Mammary epithelial cell (primary cell): ENCODE measurements at regions of chr5 and their contacts with region 1.

Region 1: GRCh38 chr5:38922199-38922598 is 76.4 kb downstream of the OSMR start:
- DNase-seq: peak; percentile 33
- H3K4me3 ChIP-seq: no peak overlapping the region
- H3K27ac ChIP-seq: no peak overlapping the region
- H3K4me1 ChIP-seq: no peaks in the 10 kb centered on the region
- H3K27me3 ChIP-seq: no peaks in the 10 kb centered on the region
- CTCF ChIP-seq: peak; percentile 91

Region 2: DNA sequence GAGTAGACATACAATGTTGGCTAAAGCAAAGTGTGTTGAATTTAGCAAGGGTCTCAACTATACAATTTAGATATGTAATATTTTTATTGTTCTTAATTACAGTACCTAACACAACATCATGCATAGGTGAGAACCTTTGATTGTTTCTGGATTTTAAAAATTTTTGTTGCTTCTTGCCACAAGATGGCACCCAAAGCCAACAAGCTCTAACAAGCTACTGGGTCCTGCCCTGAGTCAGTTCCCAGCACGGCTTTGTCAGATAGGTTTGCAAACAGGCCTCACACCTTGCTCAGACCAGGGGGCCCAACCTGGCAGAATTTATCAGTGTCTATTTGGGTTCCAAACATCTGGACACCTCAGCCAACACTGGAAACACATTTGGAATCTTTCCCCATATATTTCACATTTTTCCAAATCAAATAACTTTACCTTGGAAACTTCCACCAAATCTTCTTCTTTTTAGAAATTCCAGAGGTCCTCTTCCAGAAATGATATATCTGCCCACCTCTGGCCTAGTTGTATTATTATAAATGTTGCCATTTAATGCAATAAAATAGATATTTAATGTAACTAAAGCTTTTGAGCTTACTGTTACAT is 713.3 kb before region 1 on chr5:
- CTCF ChIA-PET with region 1: no interaction called
- dilution Hi-C with region 1: no loop called
- in situ Hi-C with region 1: no loop called
- intact Hi-C with region 1: loop called (anchors 5 kb)
- DNase-seq: peak; percentile 37
- H3K4me3 ChIP-seq: no peak overlapping the region
- H3K27ac ChIP-seq: no peak overlapping the region
- H3K4me1 ChIP-seq: no peaks in the 10 kb centered on the region
- H3K27me3 ChIP-seq: no peaks in the 10 kb centered on the region
- CTCF ChIP-seq: peak; percentile 39 to 75

Region 3: DNA sequence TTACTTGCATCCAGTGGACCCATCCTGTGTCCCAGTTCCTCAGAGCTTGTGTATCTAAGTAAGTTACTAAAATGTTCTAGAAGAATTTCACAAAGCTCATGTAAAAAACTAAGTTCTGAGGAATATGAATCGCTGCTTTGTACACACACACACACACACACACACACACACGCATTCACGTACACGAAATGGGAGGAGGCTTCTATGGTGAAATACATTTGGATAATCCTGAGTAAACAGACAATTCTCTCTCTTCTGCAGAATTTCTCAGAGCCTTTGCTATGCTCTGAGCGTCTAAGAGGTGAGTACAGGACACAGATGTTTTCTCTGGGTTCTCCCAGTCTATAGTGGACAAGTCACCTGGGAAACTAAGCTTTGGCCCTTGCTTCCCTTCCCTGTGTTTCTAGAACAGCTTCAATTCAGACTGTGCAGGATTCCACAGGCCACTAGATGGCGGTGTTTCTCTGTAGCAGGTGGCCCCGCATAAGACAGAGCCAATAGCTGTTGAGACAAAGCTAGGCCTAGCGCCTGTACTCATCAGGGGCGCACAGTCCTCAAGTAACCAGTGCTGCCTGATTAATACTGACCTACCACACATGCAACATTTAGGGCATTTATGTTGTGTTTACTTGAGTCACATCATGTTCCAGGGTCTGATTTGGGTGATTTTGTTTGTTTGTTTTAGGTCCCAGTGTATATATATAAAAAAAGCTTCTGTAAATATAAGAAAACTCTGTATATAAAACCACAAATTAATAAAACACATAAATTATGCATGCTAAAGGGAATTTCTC is 480.5 kb before region 1 on chr5:
- CTCF ChIA-PET with region 1: interaction called, 8 read pairs
- dilution Hi-C with region 1: no loop called
- in situ Hi-C with region 1: no loop called
- intact Hi-C with region 1: loop called (anchors 1 kb)
- DNase-seq: peak; percentile 73
- H3K4me3 ChIP-seq: no peak overlapping the region
- H3K27ac ChIP-seq: no peak overlapping the region
- H3K4me1 ChIP-seq: no peaks in the 10 kb centered on the region
- H3K27me3 ChIP-seq: no peaks in the 10 kb centered on the region
- CTCF ChIP-seq: peak; percentile 98

Region 4: GRCh38 chr5:38831909-38832308 is 90.3 kb before region 1 on chr5:
- CTCF ChIA-PET with region 1: interaction called, 11 read pairs
- dilution Hi-C with region 1: no loop called
- in situ Hi-C with region 1: no loop called
- intact Hi-C with region 1: loop called (anchors 1 kb)
- DNase-seq: peak; percentile 46
- H3K4me3 ChIP-seq: no peak overlapping the region
- H3K27ac ChIP-seq: peak overlapping the region; percentile 86
- H3K4me1 ChIP-seq: peaks cover 38% of the 10 kb centered on the region
- H3K27me3 ChIP-seq: no peaks in the 10 kb centered on the region
- CTCF ChIP-seq: peak; percentile 35 to 54

Region 5: DNA sequence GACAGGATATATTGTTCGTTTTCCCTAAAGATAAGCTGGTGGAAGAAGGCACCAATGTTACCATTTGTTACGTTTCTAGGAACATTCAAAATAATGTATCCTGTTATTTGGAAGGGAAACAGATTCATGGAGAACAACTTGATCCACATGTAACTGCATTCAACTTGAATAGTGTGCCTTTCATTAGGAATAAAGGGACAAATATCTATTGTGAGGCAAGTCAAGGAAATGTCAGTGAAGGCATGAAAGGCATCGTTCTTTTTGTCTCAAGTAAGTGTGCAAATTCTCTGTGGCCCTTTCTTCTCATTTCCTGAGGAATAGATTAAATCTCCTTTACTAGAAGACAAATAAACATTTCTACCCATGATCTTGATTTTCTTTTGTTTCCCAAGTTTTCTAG is 38.4 kb before region 1 on chr5:
- CTCF ChIA-PET with region 1: no interaction called
- dilution Hi-C with region 1: loop called (anchors 5 kb)
- in situ Hi-C with region 1: no loop called
- intact Hi-C with region 1: no loop called
- DNase-seq: no peak
- H3K4me3 ChIP-seq: no peak overlapping the region
- H3K27ac ChIP-seq: no peak overlapping the region
- H3K4me1 ChIP-seq: no peaks in the 10 kb centered on the region
- H3K27me3 ChIP-seq: no peaks in the 10 kb centered on the region
- CTCF ChIP-seq: no peak